Heart right ventricle (tissue), 16 donors: ENCODE measurements at regions of chr1 and their contacts with region 1.

Region 1: DNA sequence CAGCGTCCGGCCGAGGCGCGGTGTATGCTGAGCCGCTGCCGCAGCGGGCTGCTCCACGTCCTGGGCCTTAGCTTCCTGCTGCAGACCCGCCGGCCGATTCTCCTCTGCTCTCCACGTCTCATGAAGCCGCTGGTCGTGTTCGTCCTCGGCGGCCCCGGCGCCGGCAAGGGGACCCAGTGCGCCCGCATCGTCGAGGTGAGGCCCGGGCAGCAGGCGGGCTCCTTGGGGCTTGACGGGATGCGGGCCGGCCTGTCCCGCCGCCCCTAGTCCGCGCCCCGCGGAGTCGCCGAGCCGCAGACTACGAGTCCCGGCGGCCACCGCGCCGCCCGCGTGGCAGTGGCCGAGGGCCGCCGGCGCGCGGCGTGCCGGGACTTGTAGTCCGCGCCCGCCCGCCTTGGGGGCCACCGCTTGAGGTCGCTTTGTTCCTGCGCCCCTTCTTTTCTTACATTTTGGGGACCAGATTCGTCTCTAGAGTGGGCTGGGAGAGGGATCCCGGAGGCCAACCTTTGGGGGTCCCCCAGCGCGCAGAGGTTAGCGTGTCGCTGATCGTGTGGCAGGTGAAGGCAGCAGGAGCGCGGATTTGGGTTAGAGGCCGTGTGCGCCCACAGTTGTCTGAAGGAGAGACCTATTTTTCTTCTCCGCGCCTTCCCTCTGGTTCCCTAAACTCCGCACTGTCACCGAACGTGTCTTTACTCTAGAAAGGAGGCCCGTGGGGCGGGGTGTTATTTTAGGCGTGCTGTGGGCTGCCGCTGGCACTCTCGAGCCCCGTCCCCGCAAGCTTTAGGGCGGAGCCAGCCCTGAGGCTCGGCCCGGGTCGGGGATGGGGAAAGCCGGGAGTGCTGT is 553 bp downstream of the CMPK1 start:
- DNase-seq: peak; percentile 75 to 83
- ATAC-seq: peak; percentile 92 to 97 (median 96)
- H3K4me3 ChIP-seq: peak overlapping the region; percentile 63 to 99 (median 90)
- H3K27ac ChIP-seq: peak overlapping the region; percentile 95 to 100 (median 99)
- H3K4me1 ChIP-seq: peaks cover 0 to 56% (median 41%) of the 10 kb centered on the region in 9 donors
- H3K27me3 ChIP-seq: no peaks in the 10 kb centered on the region
- CTCF ChIP-seq: peak in 5 of 9 donors; percentile 19 to 61 (median 28)

Region 2: DNA sequence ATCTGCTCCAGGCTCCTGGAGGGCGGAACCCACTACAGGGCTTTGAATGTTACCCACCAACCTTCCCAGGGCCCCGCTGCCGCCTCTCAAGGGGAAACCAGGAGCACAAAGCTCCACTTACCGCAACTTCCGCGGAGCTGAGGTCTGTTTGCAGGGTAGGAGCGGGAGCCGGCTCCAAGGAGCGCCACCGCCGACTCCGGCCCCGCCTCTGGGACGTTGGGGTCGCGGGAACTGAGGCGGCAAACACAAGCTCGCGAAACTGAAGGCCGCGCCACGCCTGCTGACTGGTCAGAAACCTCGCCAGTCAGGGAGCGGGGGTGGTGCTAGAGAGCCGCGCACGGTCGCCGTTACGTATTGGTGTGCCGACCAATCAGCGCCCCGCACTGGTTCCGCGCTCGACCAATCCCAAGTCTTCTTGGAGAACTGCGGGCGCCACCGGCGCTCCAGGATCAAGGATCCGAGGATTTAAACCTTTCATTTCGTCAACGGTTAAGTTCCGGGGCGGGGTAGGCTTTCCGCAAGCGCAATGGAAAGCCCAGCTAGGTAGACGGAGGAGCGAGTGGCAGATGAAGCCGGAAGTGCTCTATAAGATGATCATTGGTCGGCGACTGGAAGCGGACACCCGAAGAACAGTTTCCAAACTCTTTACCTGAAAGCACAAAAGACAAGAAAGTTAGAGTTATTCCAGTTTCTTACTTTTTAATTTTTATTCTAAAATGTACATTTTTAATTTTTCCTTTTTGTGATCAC is 20.1 kb before region 1 on chr1 and contains the start of gene STIL:
- intact Hi-C with region 1: loop called in 2 of 10 experiments (anchors 1 to 2 kb)
- DNase-seq: peak; percentile 98
- ATAC-seq: peak; percentile 100
- H3K4me3 ChIP-seq: peak within 1 kb of the TSS; percentile 47 to 92 (median 70)
- H3K27ac ChIP-seq: peak within 1 kb of the TSS; percentile 37 to 91 (median 75)
- H3K4me1 ChIP-seq: peaks cover 0 to 14% (median 7%) of the 10 kb centered on the region in 9 donors
- H3K27me3 ChIP-seq: no peaks in the 10 kb centered on the region
- CTCF ChIP-seq: peak in 3 of 9 donors; percentile 10 to 30 (median 17)
- total RNA-seq, gene STIL: 0.44 to 2.1 (median 0.71) TPM